Caco-2 (cell line): ENCODE measurements at regions of chr14 and their contacts with region 1.

Region 1: GRCh38 chr14:37279818-37280217 is 82.1 kb downstream of the MIPOL1 start:
- DNase-seq: no peak
- H3K4me3 ChIP-seq: no peak overlapping the region
- H3K4me3 Mint-ChIP-seq: no peak overlapping the region
- H3K27ac Mint-ChIP-seq: no peak overlapping the region
- H3K4me1 ChIP-seq: no peaks in the 10 kb centered on the region
- H3K4me1 Mint-ChIP-seq: no peaks in the 10 kb centered on the region
- H3K27me3 ChIP-seq: no peaks in the 10 kb centered on the region
- H3K27me3 Mint-ChIP-seq: no peaks in the 10 kb centered on the region
- CTCF ChIP-seq: no peak

Region 2: DNA sequence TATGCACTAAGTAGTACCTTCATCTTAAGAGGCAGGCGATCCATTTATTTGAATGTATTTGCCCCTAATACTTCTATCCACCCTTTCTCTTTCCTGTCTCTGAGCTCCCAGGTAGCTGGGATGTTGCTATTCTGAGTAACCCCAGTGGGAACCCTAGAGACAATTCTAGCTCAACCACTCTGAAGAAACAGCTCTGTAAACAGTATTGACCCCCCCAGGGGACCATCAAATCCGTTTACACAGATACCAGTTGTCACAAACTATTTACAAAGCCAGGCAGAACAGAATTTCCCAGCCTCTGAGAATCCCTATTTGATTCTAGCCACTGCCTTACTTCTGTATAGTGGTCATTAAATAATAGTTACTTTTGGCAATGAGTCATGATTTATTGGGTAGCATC is 17.2 kb before region 1 on chr14:
- CTCF ChIA-PET with region 1: no interaction called
- POLR2A ChIA-PET with region 1: no interaction called
- intact Hi-C with region 1: no loop called
- DNase-seq: no peak
- H3K4me3 ChIP-seq: no peak overlapping the region
- H3K4me3 Mint-ChIP-seq: no peak overlapping the region
- H3K27ac Mint-ChIP-seq: no peak overlapping the region
- H3K4me1 ChIP-seq: no peaks in the 10 kb centered on the region
- H3K4me1 Mint-ChIP-seq: peaks cover 9% of the 10 kb centered on the region
- H3K27me3 ChIP-seq: no peaks in the 10 kb centered on the region
- H3K27me3 Mint-ChIP-seq: no peaks in the 10 kb centered on the region
- CTCF ChIP-seq: no peak

Region 3: GRCh38 chr14:37329189-37330001 is 49.6 kb after region 1 on chr14:
- CTCF ChIA-PET with region 1: no interaction called
- POLR2A ChIA-PET with region 1: no interaction called
- intact Hi-C with region 1: loop called (anchors 2 kb)
- DNase-seq: peak in 1 of 2 experiments; percentile 27
- H3K4me3 ChIP-seq: no peak overlapping the region
- H3K4me3 Mint-ChIP-seq: peak overlapping the region; percentile 56
- H3K27ac Mint-ChIP-seq: peak overlapping the region; percentile 65
- H3K4me1 ChIP-seq: peaks cover 23% of the 10 kb centered on the region
- H3K4me1 Mint-ChIP-seq: peaks cover 15% of the 10 kb centered on the region
- H3K27me3 ChIP-seq: no peaks in the 10 kb centered on the region
- H3K27me3 Mint-ChIP-seq: no peaks in the 10 kb centered on the region
- CTCF ChIP-seq: no peak